ENCODE measurements at regions of chr4 and their contacts with region 1.

Region 1: DNA sequence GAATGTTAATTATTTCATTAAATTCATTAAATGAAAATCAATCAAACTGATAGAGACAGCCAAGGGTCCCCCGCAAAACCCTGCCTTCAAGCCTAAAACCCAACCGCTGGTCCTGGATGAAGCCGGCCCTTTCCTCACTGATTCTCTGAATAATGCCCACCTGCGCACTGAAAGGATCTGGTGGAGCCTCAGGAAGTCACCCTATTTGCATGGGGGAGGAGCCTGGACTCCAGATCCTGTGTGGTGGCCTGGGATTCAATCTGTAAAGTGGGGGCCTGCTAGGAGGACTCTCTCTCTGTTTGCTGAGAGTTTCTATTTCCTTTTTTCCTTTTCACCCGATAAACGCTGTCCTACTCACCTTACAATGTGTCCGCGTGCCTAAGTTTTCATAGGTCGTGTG is 97.9 kb upstream of the ADAMTS3 start:
- DNase-seq: no peak
- H3K4me3 ChIP-seq: no peak overlapping the region
- H3K27ac ChIP-seq: no peak overlapping the region
- H3K4me1 ChIP-seq: no peaks in the 10 kb centered on the region
- H3K27me3 ChIP-seq: no peaks in the 10 kb centered on the region
- CTCF ChIP-seq: no peak
- POLR2A ChIP-seq: no peak

Region 2: DNA sequence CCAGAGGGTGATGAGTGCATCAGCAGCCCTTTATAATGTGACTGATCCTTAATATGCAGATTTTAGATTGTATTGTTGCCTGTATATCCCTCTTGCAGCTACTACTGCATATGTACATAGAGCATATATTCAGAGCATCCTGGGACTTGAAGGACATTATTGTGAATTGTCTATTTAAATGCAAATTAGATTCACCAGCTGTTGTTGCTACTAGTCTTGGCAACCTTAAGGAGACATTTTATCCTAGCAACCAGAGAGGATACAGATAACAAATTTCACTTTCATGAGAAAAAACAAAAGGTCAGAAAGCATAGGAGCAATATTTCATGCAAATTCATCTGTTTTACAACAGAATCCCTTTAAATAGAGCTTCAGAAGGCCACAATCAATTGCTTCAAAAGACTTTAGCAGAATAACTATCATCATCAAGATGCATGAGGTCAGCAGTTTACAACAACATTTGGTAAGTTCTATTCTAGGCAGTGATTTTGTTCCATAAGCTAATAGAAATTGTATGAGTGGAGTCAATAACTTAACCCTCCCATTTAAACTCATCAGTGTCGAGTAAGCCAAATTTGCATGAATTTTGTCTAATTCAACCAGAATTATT is 1031.7 kb before region 1 on chr4:
- intact Hi-C with region 1: loop called (anchors 5 kb)
- DNase-seq: no peak
- H3K4me3 ChIP-seq: no peak overlapping the region
- H3K27ac ChIP-seq: no peak overlapping the region
- H3K4me1 ChIP-seq: no peaks in the 10 kb centered on the region
- H3K27me3 ChIP-seq: no peaks in the 10 kb centered on the region
- CTCF ChIP-seq: no peak
- POLR2A ChIP-seq: no peak

Region 3: GRCh38 chr4:72744103-72744725 is 77.3 kb after region 1 on chr4:
- intact Hi-C with region 1: no loop called
- DNase-seq: no peak
- H3K4me3 ChIP-seq: no peak overlapping the region
- H3K27ac ChIP-seq: no peak overlapping the region
- H3K4me1 ChIP-seq: no peaks in the 10 kb centered on the region
- H3K27me3 ChIP-seq: no peaks in the 10 kb centered on the region
- CTCF ChIP-seq: no peak
- POLR2A ChIP-seq: no peak

Measured in vagina (tissue), 2 donors.